Left ventricle myocardium inferior (tissue), 1 donor: ENCODE measurements at regions of chr6 and their contacts with region 1.

Region 1: GRCh38 chr6:75266716-75267291 is 17.8 kb downstream of the TMEM30A start:
- DNase-seq: no peak
- H3K4me3 ChIP-seq: no peak overlapping the region
- H3K27ac ChIP-seq: no peak overlapping the region
- H3K4me1 ChIP-seq: peaks cover 30% of the 10 kb centered on the region
- H3K27me3 ChIP-seq: no peaks in the 10 kb centered on the region
- CTCF ChIP-seq: peak; percentile 94

Region 2: DNA sequence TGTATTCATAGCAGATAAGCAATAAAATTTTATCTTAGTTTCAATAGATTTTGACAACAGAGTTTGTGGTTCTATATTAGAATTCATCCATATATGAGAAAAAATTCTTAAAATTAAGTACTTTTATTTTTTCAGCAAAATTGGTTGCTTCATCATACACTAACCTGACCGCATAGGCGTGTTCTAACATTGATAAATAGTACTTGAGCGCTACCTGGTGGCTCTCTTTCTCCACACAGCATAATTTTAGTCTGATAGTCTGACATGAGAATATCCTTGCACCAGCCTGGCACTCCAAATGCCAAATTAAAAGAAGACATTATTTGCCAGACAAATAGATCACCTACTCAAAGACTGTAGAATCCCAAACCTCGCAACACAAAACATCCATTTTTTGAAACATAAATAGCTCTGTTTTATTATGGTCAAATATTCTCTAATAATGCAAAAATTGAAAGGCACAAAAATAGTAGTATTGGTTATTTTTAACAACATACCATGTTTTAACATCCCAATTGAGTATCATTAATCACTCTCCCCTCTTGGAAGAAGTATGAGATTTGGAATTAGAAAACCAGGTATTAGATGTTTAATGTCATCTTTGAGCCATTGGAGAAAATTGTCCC is 259.8 kb after region 1 on chr6:
- intact Hi-C with region 1: loop called (anchors 2 kb)
- DNase-seq: no peak
- H3K4me3 ChIP-seq: no peak overlapping the region
- H3K27ac ChIP-seq: no peak overlapping the region
- H3K4me1 ChIP-seq: peaks cover 10% of the 10 kb centered on the region
- H3K27me3 ChIP-seq: no peaks in the 10 kb centered on the region
- CTCF ChIP-seq: peak; percentile 85